WTC11 (cell line): ENCODE measurements at regions of chr12 and their contacts with region 1.

Region 1: DNA sequence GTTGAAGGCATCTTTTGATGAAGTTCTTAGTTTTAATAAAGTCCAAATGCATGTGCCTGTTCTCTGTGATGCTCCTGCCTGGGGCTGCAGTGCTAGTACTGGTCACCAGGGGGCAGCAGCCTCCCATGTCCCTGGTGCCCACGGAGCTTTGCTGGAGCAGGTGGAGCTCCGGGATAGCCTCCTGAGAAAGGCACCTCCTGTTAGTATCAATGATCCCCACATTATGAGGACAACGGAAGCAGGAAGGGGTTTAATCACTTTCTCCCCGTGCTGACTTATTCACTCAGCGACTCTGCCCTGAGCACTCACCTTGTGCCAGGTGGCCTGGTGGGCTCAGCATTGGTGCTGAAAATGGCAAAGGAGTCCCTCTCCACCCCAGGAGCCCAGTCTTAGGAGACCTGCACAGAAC is 123.0 kb upstream of the PZP start:
- DNase-seq: peak; percentile 83
- ATAC-seq: peak; percentile 92
- H3K4me3 Mint-ChIP-seq: no peak overlapping the region
- H3K27ac Mint-ChIP-seq: peak overlapping the region; percentile 81
- H3K4me1 Mint-ChIP-seq: peaks cover 3% of the 10 kb centered on the region
- H3K27me3 Mint-ChIP-seq: no peaks in the 10 kb centered on the region; the same call in 1 of the 2 replicates
- CTCF ChIP-seq: peak; percentile 99

Region 2: GRCh38 chr12:9214536-9214935 is 116.7 kb before region 1 on chr12:
- CTCF ChIA-PET with region 1: no interaction called
- POLR2A ChIA-PET with region 1: no interaction called
- DNase-seq: no peak
- ATAC-seq: no peak
- H3K4me3 Mint-ChIP-seq: no peak overlapping the region
- H3K27ac Mint-ChIP-seq: no peak overlapping the region
- H3K4me1 Mint-ChIP-seq: no peaks in the 10 kb centered on the region
- H3K27me3 Mint-ChIP-seq: no peaks in the 10 kb centered on the region; the same call in 1 of the 2 replicates
- CTCF ChIP-seq: no peak

Region 3: DNA sequence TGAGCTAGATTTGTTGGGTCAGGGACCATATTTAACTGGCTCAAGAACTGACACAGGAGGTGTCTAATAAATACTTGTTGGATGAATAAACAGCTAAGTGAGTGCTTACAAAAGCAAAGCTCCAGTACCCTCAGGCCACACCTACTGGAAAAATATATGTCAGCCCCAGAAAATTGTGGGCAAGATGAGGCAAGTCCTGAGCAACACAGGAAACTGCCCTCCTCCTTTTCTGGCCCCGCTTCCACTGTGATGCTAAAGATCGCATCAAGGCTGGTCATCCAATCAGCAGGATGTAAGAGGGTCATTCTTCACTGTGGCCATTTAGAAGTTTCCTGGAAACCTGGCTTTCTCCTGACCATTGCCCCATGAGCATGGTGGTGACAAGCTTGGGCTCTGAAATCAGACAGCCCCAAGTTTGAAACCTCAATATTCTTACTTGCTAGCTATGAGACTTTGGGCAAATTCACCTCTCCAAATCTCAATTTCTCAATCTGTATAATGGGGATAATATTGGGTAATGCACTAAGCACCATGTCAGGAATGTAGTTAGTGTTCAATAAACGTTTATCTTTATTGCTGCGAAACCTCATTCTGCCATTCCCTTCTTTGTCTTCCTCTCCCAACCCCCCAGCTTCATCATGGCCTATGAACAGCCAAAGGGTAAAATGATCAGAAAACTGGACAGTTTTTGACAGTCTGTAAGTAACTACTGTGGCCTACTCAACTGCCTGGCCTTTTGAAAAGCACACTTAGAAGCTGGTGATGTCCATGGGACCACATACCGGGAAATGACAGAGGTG is 16.3 kb after region 1 on chr12:
- CTCF ChIA-PET with region 1: interaction called, 13 read pairs
- POLR2A ChIA-PET with region 1: no interaction called
- DNase-seq: no peak
- ATAC-seq: no peak
- H3K4me3 Mint-ChIP-seq: no peak overlapping the region
- H3K27ac Mint-ChIP-seq: no peak overlapping the region
- H3K4me1 Mint-ChIP-seq: peaks cover 9% of the 10 kb centered on the region; the same call in 1 of the 2 replicates
- H3K27me3 Mint-ChIP-seq: no peaks in the 10 kb centered on the region
- CTCF ChIP-seq: no peak

Region 4: GRCh38 chr12:9364224-9365176 is 33.3 kb after region 1 on chr12:
- CTCF ChIA-PET with region 1: interaction called, 23 read pairs
- POLR2A ChIA-PET with region 1: no interaction called
- DNase-seq: peak; percentile 65
- ATAC-seq: peak; percentile 97
- H3K4me3 Mint-ChIP-seq: peak overlapping the region; percentile 50
- H3K27ac Mint-ChIP-seq: peak overlapping the region; percentile 98
- H3K4me1 Mint-ChIP-seq: peaks cover 49% of the 10 kb centered on the region
- H3K27me3 Mint-ChIP-seq: peaks cover 2% of the 10 kb centered on the region; the same call in 1 of the 2 replicates
- CTCF ChIP-seq: no peak

Region 5: GRCh38 chr12:9372202-9372601 is 41.0 kb after region 1 on chr12:
- CTCF ChIA-PET with region 1: interaction called, 23 read pairs
- POLR2A ChIA-PET with region 1: no interaction called
- DNase-seq: no peak
- ATAC-seq: peak; percentile 84
- H3K4me3 Mint-ChIP-seq: no peak overlapping the region
- H3K27ac Mint-ChIP-seq: no peak overlapping the region
- H3K4me1 Mint-ChIP-seq: peaks cover 2% of the 10 kb centered on the region
- H3K27me3 Mint-ChIP-seq: no peaks in the 10 kb centered on the region
- CTCF ChIP-seq: no peak

Region 6: DNA sequence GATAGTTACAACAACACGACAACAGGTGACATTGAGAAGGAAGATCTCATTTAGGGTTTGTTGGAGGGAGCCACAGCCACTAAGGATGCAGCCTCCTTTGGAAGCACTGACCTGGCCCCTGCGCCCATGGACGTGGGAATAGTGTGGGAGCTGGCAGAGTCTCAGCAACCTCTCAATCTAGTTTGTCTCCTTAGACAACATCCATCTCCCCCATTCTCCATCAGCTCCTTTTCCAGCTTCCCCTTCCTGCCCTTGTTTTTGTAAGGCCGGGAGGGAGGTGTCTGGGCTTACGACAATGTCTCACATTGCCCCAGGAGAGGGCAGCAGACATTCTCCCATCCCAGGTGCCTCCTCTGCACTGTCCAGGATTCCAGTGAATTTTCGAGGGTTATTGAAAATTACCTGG is 47.2 kb after region 1 on chr12:
- CTCF ChIA-PET with region 1: interaction called, 30 read pairs
- POLR2A ChIA-PET with region 1: no interaction called
- DNase-seq: peak; percentile 41
- ATAC-seq: peak; percentile 98
- H3K4me3 Mint-ChIP-seq: no peak overlapping the region
- H3K27ac Mint-ChIP-seq: no peak overlapping the region
- H3K4me1 Mint-ChIP-seq: peaks cover 6% of the 10 kb centered on the region; the same call in 1 of the 2 replicates
- H3K27me3 Mint-ChIP-seq: no peaks in the 10 kb centered on the region
- CTCF ChIP-seq: no peak